Ovary (tissue), 10 donors: ENCODE measurements at regions of chr2 and their contacts with region 1.

Region 1: GRCh38 chr2:100453853-100454252 is 16.4 kb upstream of the NMS start:
- DNase-seq: no peak
- H3K4me3 ChIP-seq: no peak overlapping the region
- H3K27ac ChIP-seq: no peak overlapping the region
- H3K4me1 ChIP-seq: no peaks in the 10 kb centered on the region
- H3K27me3 ChIP-seq: no peaks in the 10 kb centered on the region
- CTCF ChIP-seq: no peak
- EP300 ChIP-seq: no peak
- POLR2A ChIP-seq: no peak

Region 2: DNA sequence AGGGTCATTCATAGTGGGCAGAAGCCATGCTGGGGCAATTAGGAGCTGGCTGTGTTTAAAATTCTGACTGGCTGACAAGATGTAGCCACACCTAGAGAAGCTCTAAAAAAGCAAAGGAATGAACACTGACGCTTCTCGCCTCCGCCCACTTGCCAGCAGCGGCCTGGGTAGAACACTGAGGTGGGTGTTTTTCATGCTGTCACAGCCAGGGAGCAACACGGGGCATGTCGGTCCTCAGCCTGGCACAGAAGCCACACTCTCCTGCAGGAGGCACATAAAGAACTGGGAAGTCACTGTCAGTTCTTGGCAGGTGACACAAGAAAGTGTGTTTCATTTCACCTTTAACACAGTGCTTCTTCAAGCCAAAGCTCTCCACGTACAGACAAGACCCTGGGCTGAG is 46.7 kb before region 1 on chr2:
- intact Hi-C with region 1: no loop called
- DNase-seq: no peak
- H3K4me3 ChIP-seq: no peak overlapping the region
- H3K27ac ChIP-seq: no peak overlapping the region
- H3K4me1 ChIP-seq: no peaks in the 10 kb centered on the region
- H3K27me3 ChIP-seq: no peaks in the 10 kb centered on the region
- CTCF ChIP-seq: no peak
- EP300 ChIP-seq: no peak
- POLR2A ChIP-seq: no peak

Region 3: DNA sequence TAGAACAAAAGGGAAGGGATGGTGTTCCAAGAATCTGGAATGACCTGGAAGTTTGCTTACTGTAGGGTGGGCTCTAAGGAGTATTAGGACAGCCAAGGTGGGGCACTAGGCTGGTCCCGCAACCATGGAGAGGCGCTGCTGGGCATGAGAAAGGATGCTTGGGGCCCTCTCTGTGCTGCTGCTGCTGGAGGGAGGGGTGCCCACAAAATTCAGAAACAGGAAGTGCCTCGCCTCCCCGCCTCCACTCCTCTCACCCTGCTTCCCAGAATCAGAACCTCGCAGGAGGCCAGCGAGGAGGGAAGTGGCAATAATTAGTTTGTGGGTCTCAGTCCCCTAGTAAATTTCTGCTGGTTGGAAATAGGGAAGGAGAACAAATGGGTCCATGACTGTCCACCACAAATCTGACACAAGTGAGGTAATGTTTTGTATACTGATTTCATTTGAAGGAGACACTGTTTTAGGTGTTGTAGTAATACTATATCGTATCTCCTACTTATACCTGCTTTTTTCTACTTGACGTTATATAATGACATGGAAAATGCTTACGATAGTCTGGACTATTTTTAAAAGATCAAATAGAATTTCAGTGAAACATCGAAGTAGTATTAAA is 101.0 kb after region 1 on chr2:
- intact Hi-C with region 1: loop called in 1 of 4 experiments (anchors 10 kb)
- DNase-seq: no peak
- H3K4me3 ChIP-seq: no peak overlapping the region
- H3K27ac ChIP-seq: no peak overlapping the region
- H3K4me1 ChIP-seq: peaks cover 2% of the 10 kb centered on the region
- H3K27me3 ChIP-seq: no peaks in the 10 kb centered on the region
- CTCF ChIP-seq: no peak
- EP300 ChIP-seq: no peak
- POLR2A ChIP-seq: no peak